CD4-positive, alpha-beta T cell (primary cell): ENCODE measurements at regions of chrX and their contacts with region 1.

Region 1: DNA sequence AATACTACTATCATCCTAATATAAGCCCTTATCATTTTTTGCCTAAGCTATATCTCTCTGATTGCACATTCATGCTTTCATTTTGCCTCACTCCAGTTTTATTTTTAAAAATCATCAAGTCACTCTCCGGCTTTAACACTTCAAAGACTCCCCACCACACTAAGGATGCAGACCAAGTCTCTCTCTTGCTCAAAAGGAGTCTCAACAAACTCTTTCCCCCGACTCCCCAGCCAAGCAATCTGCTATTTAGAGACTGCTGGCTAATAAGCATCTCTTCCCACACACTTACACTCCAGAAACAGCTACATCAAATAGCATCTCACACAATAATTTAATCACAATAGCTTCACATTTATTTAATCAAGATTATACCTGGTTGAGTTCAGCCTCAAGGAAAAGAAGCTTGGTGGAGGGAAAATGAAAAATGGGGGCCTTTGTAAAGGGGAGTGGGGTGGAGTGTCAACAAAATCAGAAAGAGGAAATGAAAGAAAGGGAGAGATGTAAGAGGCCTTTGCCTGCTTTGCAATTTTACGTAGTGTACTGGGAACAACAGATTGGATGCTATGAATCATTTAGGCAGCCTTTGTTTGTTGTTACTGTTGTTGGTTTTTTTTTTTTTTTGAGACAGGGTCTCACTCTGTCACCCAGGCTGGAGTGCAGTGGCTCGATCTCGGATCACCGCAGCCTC is 104.1 kb upstream of the MCF2 start:
- DNase-seq: no peak
- ATAC-seq: no peak
- H3K4me3 ChIP-seq: no peak overlapping the region
- H3K4me3 Mint-ChIP-seq: no peak overlapping the region
- H3K27ac ChIP-seq: no peak overlapping the region
- H3K27ac Mint-ChIP-seq: no peak overlapping the region
- H3K4me1 ChIP-seq: peaks cover under 1% of the 10 kb centered on the region
- H3K4me1 Mint-ChIP-seq: peaks cover 16% of the 10 kb centered on the region
- H3K27me3 ChIP-seq: no peaks in the 10 kb centered on the region
- H3K27me3 Mint-ChIP-seq: no peaks in the 10 kb centered on the region
- CTCF ChIP-seq: no peak

Region 2: DNA sequence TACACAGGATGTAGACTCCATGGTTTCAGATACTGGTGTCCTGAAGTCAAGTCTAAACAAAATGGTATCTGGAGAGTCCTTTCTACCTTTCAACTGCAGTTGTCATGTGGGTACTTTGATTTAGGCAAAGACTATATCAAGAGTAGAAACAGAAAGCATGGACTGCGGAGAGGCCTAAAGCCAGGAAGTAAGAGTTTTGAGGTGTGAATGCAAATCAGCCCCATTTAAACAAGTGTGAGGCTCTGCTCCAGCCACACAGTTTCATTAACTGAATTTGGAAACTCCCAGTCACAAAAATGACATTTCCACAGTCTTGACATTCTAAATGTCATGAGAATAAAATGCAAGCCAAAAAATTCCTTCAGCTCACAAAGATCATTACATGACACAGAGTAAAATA is 16.9 kb before region 1 on chrX:
- CTCF ChIA-PET with region 1: no interaction called
- POLR2A ChIA-PET with region 1: no interaction called
- intact Hi-C with region 1: no loop called
- DNase-seq: peak in 1 of 14 experiments; percentile 32
- ATAC-seq: no peak
- H3K4me3 ChIP-seq: no peak overlapping the region
- H3K4me3 Mint-ChIP-seq: no peak overlapping the region
- H3K27ac ChIP-seq: no peak overlapping the region
- H3K27ac Mint-ChIP-seq: no peak overlapping the region
- H3K4me1 ChIP-seq: no peaks in the 10 kb centered on the region
- H3K4me1 Mint-ChIP-seq: no peaks in the 10 kb centered on the region
- H3K27me3 ChIP-seq: no peaks in the 10 kb centered on the region
- H3K27me3 Mint-ChIP-seq: no peaks in the 10 kb centered on the region
- CTCF ChIP-seq: no peak

Region 3: GRCh38 chrX:139905041-139905440 is 93.0 kb after region 1 on chrX:
- CTCF ChIA-PET with region 1: no interaction called
- POLR2A ChIA-PET with region 1: no interaction called
- intact Hi-C with region 1: no loop called
- DNase-seq: no peak
- ATAC-seq: no peak
- H3K4me3 ChIP-seq: no peak overlapping the region
- H3K4me3 Mint-ChIP-seq: no peak overlapping the region
- H3K27ac ChIP-seq: no peak overlapping the region
- H3K27ac Mint-ChIP-seq: no peak overlapping the region
- H3K4me1 ChIP-seq: no peaks in the 10 kb centered on the region
- H3K4me1 Mint-ChIP-seq: peaks cover 39% of the 10 kb centered on the region
- H3K27me3 ChIP-seq: no peaks in the 10 kb centered on the region
- H3K27me3 Mint-ChIP-seq: no peaks in the 10 kb centered on the region
- CTCF ChIP-seq: no peak

Region 4: DNA sequence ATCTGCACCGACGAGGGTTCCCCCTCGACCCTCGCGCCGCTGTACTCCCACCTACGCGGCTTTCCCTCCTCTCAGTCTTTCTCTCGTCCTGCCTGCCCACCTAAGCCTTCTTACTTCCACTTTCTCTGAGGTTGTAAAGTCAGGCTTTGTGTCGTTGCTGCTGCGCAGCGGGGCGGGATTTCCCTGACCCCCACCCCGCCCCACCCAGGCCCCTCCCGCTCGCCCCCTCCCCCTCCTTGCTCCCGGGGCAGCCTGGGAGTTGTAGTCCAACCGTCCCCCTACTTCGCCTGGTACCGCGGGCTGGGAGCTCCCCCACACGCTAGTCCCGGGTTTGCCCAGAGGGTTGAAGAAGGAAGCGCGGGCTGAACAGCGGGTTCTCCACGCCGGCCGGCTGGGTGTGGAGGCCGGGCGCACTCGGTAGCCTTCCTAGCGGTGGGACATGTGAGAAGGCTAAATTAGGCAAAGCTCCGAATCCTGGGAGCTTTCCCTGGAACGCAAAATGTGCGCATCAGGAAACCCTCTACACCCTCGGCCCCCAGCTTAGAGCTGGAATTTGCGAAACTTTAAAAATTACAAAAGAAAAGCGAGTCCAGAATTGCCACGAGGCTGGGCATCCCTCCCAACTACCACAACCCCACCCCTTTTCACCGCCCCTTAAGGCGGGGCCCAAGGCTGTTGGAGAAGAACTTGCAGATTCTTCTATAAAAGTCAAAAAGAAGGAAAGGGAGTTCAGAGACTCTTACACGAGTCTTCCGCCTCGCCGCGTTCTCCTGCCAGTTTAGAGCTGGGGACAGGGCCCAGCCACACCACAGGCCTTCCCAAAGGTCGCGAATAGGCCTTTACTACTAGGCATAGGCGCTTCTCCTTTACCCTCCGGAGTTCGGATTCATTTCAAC is 121.1 kb after region 1 on chrX and contains the start of gene ATP11C:
- CTCF ChIA-PET with region 1: no interaction called
- POLR2A ChIA-PET with region 1: no interaction called
- intact Hi-C with region 1: loop called in 1 of 2 experiments (anchors 10 kb)
- DNase-seq: peak; percentile 69 to 91 (median 78)
- ATAC-seq: peak; percentile 82
- H3K4me3 ChIP-seq: peak within 1 kb of the TSS; percentile 78
- H3K4me3 Mint-ChIP-seq: peak within 1 kb of the TSS; percentile 95
- H3K27ac ChIP-seq: peak within 1 kb of the TSS; percentile 72 to 89
- H3K27ac Mint-ChIP-seq: peak within 1 kb of the TSS; percentile 97
- H3K4me1 ChIP-seq: peaks cover 13% of the 10 kb centered on the region
- H3K4me1 Mint-ChIP-seq: peaks cover 32% of the 10 kb centered on the region
- H3K27me3 ChIP-seq: no peaks in the 10 kb centered on the region
- H3K27me3 Mint-ChIP-seq: no peaks in the 10 kb centered on the region
- CTCF ChIP-seq: no peak
- total RNA-seq, gene ATP11C: 15.2 to 18.2 TPM

Region 5: GRCh38 chrX:140292961-140293360 is 480.9 kb after region 1 on chrX:
- CTCF ChIA-PET with region 1: no interaction called
- POLR2A ChIA-PET with region 1: no interaction called
- intact Hi-C with region 1: no loop called
- DNase-seq: no peak
- ATAC-seq: no peak
- H3K4me3 ChIP-seq: no peak overlapping the region
- H3K4me3 Mint-ChIP-seq: no peak overlapping the region
- H3K27ac ChIP-seq: no peak overlapping the region
- H3K27ac Mint-ChIP-seq: no peak overlapping the region
- H3K4me1 ChIP-seq: no peaks in the 10 kb centered on the region
- H3K4me1 Mint-ChIP-seq: no peaks in the 10 kb centered on the region
- H3K27me3 ChIP-seq: no peaks in the 10 kb centered on the region
- H3K27me3 Mint-ChIP-seq: no peaks in the 10 kb centered on the region
- CTCF ChIP-seq: no peak